CD4-positive, alpha-beta memory T cell (primary cell): ENCODE measurements at regions of chr2 and their contacts with region 1.

Region 1: GRCh38 chr2:28392297-28393113 is at the start of gene FOSL2:
- DNase-seq: peak; percentile 97 to 99 (median 98)
- H3K4me3 ChIP-seq: peak within 1 kb of the TSS; percentile 84 to 87
- H3K4me3 Mint-ChIP-seq: peak within 1 kb of the TSS; percentile 90 to 100 (median 94)
- H3K27ac ChIP-seq: peak within 1 kb of the TSS; percentile 89
- H3K27ac Mint-ChIP-seq: peak within 1 kb of the TSS in 6 of 7 donors; percentile 98 to 100 (median 100)
- H3K4me1 ChIP-seq: peaks cover 44% of the 10 kb centered on the region
- H3K4me1 Mint-ChIP-seq: peaks cover 7 to 44% (median 17%) of the 10 kb centered on the region in 4 donors
- H3K27me3 ChIP-seq: no peaks in the 10 kb centered on the region
- H3K27me3 Mint-ChIP-seq: peaks cover 0 to 3% of the 10 kb centered on the region in 2 donors
- total RNA-seq, gene FOSL2: 6.6 to 6.7 TPM

Region 2: DNA sequence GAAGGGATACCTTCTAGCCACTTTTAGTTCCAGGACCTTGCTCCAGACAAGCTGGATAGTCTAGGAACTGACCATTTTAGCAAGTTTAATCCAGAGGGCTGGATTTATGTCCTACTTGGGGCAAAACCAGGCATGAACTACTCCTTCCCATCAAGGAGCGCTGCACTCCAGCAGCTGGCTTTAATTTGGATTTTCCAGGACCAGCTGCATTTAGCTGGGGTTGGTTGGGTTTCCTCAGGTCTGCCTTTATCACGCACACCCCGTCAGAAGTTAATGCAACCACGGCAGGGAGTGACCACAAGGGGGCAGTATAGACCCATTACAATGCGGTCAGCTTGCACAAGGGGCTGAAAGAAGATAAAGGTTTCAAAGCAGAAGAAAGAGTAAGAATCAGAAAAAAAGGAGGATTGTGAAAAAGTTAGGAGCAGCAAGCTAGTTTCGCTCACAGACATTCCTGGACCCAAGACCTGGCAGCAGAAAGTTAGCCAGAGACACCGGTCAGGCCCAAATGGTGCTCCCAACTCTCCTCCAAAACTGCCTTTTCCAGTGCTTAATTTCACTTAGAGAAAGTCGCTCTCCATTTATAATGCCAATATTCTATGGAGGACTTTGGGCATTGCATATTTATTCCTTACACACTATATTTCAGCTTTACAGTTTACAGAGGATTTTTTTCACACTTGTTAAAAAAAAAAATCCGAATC is 688.7 kb before region 1 on chr2:
- CTCF ChIA-PET with region 1: interaction called, 8 read pairs
- POLR2A ChIA-PET with region 1: no interaction called
- intact Hi-C with region 1: loop called (anchors 1 kb)
- DNase-seq: peak; percentile 74 to 79 (median 76)
- H3K4me3 ChIP-seq: no peak overlapping the region
- H3K4me3 Mint-ChIP-seq: no peak overlapping the region
- H3K27ac ChIP-seq: no peak overlapping the region
- H3K27ac Mint-ChIP-seq: peak overlapping the region in 1 of 7 donors; percentile 2
- H3K4me1 ChIP-seq: peaks cover 8% of the 10 kb centered on the region
- H3K4me1 Mint-ChIP-seq: peaks cover 3 to 11% (median 3%) of the 10 kb centered on the region in 4 donors
- H3K27me3 ChIP-seq: no peaks in the 10 kb centered on the region
- H3K27me3 Mint-ChIP-seq: no peaks in the 10 kb centered on the region

Region 3: GRCh38 chr2:27771548-27772335 is 620.8 kb before region 1 on chr2 and contains the start of gene MRPL33:
- CTCF ChIA-PET with region 1: no interaction called
- POLR2A ChIA-PET with region 1: interaction called, 5 read pairs
- intact Hi-C with region 1: loop called (anchors 1 kb)
- DNase-seq: peak; percentile 89 to 91 (median 89)
- H3K4me3 ChIP-seq: peak within 1 kb of the TSS; percentile 78
- H3K4me3 Mint-ChIP-seq: peak within 1 kb of the TSS; percentile 98 to 100 (median 99)
- H3K27ac ChIP-seq: peak within 1 kb of the TSS; percentile 86
- H3K27ac Mint-ChIP-seq: peak within 1 kb of the TSS; percentile 98 to 100 (median 100)
- H3K4me1 ChIP-seq: peaks cover 30% of the 10 kb centered on the region
- H3K4me1 Mint-ChIP-seq: peaks cover 31 to 56% (median 46%) of the 10 kb centered on the region in 4 donors
- H3K27me3 ChIP-seq: no peaks in the 10 kb centered on the region
- H3K27me3 Mint-ChIP-seq: peaks cover 0 to 2% of the 10 kb centered on the region in 2 donors
- total RNA-seq, gene MRPL33: 36.2 to 43.4 TPM

Region 4: DNA sequence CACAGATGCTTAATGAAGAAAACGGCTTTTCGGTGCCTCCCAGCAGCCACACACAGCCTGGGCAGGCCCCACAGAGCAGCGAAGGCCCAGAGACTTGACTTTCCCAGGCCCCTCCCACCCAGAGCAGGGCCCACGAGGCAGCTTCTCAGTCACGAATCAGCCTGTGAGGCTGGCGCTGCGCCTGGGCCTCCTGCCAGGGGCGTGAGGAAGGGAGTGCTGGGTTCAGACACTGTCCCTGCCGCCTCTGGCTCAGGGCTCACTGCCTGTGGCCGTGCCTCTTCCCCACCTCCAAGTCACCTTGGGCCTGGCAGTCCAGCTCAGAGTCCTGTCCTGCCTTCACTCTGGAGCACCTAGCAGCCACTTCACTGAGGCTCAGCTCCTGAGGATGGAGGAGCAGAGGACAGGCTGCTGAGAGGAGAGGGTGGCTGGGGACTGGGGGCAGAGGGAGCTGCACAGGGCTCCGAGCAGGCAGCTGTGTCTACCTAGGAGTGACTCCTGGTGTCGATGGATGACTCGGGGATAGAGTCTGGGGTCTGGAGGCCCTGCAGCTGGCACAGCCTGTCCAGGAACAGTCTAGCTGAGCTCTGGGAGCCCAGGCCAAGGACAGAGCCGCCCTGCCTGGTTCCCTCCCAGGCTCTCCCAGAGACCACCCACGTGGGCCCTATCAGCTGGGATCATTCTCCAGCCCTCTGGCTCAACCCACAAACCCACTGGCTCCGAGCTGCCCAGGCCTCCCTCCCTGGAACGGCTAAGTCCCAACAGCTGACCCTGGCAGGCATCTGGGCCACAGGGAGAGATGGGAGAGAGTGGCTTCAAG is 36.2 kb before region 1 on chr2:
- CTCF ChIA-PET with region 1: no interaction called
- POLR2A ChIA-PET with region 1: interaction called, 39 read pairs
- intact Hi-C with region 1: loop called (anchors 1 kb)
- DNase-seq: peak in 3 of 5 donors; percentile 32 to 38 (median 35)
- H3K4me3 ChIP-seq: no peak overlapping the region
- H3K4me3 Mint-ChIP-seq: no peak overlapping the region
- H3K27ac ChIP-seq: no peak overlapping the region
- H3K27ac Mint-ChIP-seq: peak overlapping the region in 6 of 7 donors; percentile 13 to 91 (median 61)
- H3K4me1 ChIP-seq: peaks cover 47% of the 10 kb centered on the region
- H3K4me1 Mint-ChIP-seq: peaks cover 22 to 53% (median 39%) of the 10 kb centered on the region in 4 donors
- H3K27me3 ChIP-seq: no peaks in the 10 kb centered on the region
- H3K27me3 Mint-ChIP-seq: peaks cover 0 to 3% of the 10 kb centered on the region in 2 donors

Region 5: GRCh38 chr2:28366496-28367282 is 25.8 kb before region 1 on chr2:
- CTCF ChIA-PET with region 1: interaction called, 5 read pairs
- POLR2A ChIA-PET with region 1: interaction called, 49 read pairs
- intact Hi-C with region 1: loop called (anchors 1 kb)
- DNase-seq: peak; percentile 76 to 84 (median 78)
- H3K4me3 ChIP-seq: peak overlapping the region; percentile 34 to 35
- H3K4me3 Mint-ChIP-seq: peak overlapping the region; percentile 61 to 90 (median 81)
- H3K27ac ChIP-seq: peak overlapping the region; percentile 10
- H3K27ac Mint-ChIP-seq: peak overlapping the region; percentile 79 to 94 (median 93)
- H3K4me1 ChIP-seq: peaks cover 71% of the 10 kb centered on the region
- H3K4me1 Mint-ChIP-seq: peaks cover 40 to 76% (median 56%) of the 10 kb centered on the region in 4 donors
- H3K27me3 ChIP-seq: no peaks in the 10 kb centered on the region
- H3K27me3 Mint-ChIP-seq: no peaks in the 10 kb centered on the region

Region 6: GRCh38 chr2:28406276-28407096 is 14.0 kb after region 1 on chr2:
- CTCF ChIA-PET with region 1: interaction called, 16 read pairs
- POLR2A ChIA-PET with region 1: interaction called, 115 read pairs
- intact Hi-C with region 1: loop called (anchors 1 kb)
- DNase-seq: peak; percentile 70 to 90 (median 75)
- H3K4me3 ChIP-seq: no peak overlapping the region
- H3K4me3 Mint-ChIP-seq: peak overlapping the region; percentile 2 to 73 (median 54)
- H3K27ac ChIP-seq: peak overlapping the region; percentile 34
- H3K27ac Mint-ChIP-seq: peak overlapping the region; percentile 87 to 100 (median 96)
- H3K4me1 ChIP-seq: peaks cover 78% of the 10 kb centered on the region
- H3K4me1 Mint-ChIP-seq: peaks cover 53 to 91% (median 76%) of the 10 kb centered on the region in 4 donors
- H3K27me3 ChIP-seq: no peaks in the 10 kb centered on the region
- H3K27me3 Mint-ChIP-seq: no peaks in the 10 kb centered on the region

Region 7: GRCh38 chr2:28452534-28453081 is 60.1 kb after region 1 on chr2:
- CTCF ChIA-PET with region 1: interaction called, 7 read pairs
- POLR2A ChIA-PET with region 1: interaction called, 3 read pairs
- intact Hi-C with region 1: loop called (anchors 1 kb)
- DNase-seq: peak; percentile 60 to 72 (median 67)
- H3K4me3 ChIP-seq: no peak overlapping the region
- H3K4me3 Mint-ChIP-seq: no peak overlapping the region
- H3K27ac ChIP-seq: no peak overlapping the region
- H3K27ac Mint-ChIP-seq: peak overlapping the region in 2 of 7 donors; percentile 13 to 36
- H3K4me1 ChIP-seq: peaks cover 6% of the 10 kb centered on the region
- H3K4me1 Mint-ChIP-seq: peaks cover 0 to 21% (median 5%) of the 10 kb centered on the region in 4 donors
- H3K27me3 ChIP-seq: no peaks in the 10 kb centered on the region
- H3K27me3 Mint-ChIP-seq: no peaks in the 10 kb centered on the region